ENCODE measurements at regions of chr2 and their contacts with region 1.

Region 1: GRCh38 chr2:50401772-50402653 is 629.9 kb downstream of the NRXN1 start:
- DNase-seq: peak in 6 of 10 donors; percentile 37 to 63 (median 54)

Region 2: GRCh38 chr2:49687918-49688317 is 714.1 kb before region 1 on chr2:
- intact Hi-C with region 1: loop called (anchors 10 kb)
- DNase-seq: no peak

Region 3: GRCh38 chr2:49770919-49771318 is 631.1 kb before region 1 on chr2:
- intact Hi-C with region 1: loop called (anchors 5 kb)
- DNase-seq: peak in 9 of 10 donors; percentile 18 to 90 (median 68)

Region 4: DNA sequence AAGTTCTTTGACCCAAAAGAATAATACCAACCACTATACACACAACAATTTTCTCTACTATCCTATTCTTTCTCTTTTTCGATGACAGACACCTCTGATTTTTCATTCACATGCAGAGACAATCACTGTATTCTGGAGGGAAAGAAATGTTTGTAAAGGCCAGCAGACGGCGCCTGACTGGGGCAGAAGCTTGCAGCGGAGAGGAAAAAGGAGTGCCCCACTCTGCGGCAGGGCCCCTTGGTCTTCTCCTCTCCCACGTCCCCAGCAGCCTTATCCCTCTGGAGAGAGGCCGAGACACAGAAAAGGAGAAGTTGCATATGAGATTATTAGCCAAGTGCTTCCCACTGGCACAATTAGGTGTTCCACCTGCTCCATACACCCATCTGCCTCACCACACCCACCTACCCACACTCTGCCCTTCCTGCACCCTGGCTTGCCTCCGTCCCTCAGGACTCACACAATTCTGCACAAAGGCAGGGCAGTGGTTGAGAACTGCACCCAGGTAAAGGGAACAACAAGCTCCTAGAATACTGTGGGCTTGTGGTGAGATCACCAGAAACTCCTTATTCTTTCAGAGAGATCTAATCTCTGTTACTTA is 57.4 kb before region 1 on chr2:
- intact Hi-C with region 1: no loop called
- DNase-seq: peak in 8 of 10 donors; percentile 23 to 87 (median 47)

Measured in posterior cingulate gyrus (tissue), 11 donors.